Activated CD4-positive, alpha-beta memory T cell treated with anti-CD3 and anti-CD28 coated beads for 36 hours (primary cell): ENCODE measurements at regions of chr1 and their contacts with region 1.

Region 1: GRCh38 chr1:109890115-109890953 is 20.3 kb upstream of the CSF1 start:
- DNase-seq: peak; percentile 87
- H3K4me3 Mint-ChIP-seq: peak overlapping the region; percentile 1
- H3K27ac Mint-ChIP-seq: peak overlapping the region; percentile 85
- H3K4me1 Mint-ChIP-seq: peaks cover 35% of the 10 kb centered on the region
- H3K27me3 Mint-ChIP-seq: no peaks in the 10 kb centered on the region

Region 2: GRCh38 chr1:109802901-109803561 is 87.3 kb before region 1 on chr1:
- CTCF ChIA-PET with region 1: interaction called, 3 read pairs
- POLR2A ChIA-PET with region 1: interaction called, 10 read pairs
- intact Hi-C with region 1: no loop called
- DNase-seq: peak; percentile 45
- H3K4me3 Mint-ChIP-seq: peak overlapping the region; percentile 70
- H3K27ac Mint-ChIP-seq: peak overlapping the region; percentile 99
- H3K4me1 Mint-ChIP-seq: peaks cover 68% of the 10 kb centered on the region
- H3K27me3 Mint-ChIP-seq: no peaks in the 10 kb centered on the region

Region 3: DNA sequence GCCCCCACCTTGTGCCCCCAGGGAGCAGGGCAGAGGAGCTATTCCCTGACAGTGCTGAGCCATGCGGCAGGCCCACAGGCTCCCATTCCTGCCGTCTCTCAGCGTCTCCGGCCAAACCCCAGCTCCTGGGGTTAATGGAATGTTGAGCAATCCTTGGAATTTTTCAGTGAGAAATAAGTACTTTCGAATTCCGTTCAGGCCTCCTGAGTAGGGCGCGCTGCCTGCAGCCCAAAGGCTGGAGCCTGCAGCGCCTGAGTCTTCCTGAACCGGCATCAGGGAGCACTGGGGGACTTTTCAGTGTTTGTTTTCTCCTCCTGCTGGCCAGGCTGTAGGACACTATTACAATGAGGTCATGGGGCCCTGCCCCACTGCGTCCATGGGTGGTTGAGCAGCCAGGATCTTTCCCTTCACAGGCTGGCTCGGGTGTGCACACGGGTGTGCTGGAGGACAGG is 13.0 kb before region 1 on chr1:
- CTCF ChIA-PET with region 1: no interaction called
- POLR2A ChIA-PET with region 1: no interaction called
- intact Hi-C with region 1: no loop called
- DNase-seq: no peak
- H3K4me3 Mint-ChIP-seq: no peak overlapping the region
- H3K27ac Mint-ChIP-seq: no peak overlapping the region
- H3K4me1 Mint-ChIP-seq: peaks cover 27% of the 10 kb centered on the region
- H3K27me3 Mint-ChIP-seq: no peaks in the 10 kb centered on the region